CD4-positive, alpha-beta memory T cell (primary cell): ENCODE measurements at regions of chr20 and their contacts with region 1.

Region 1: DNA sequence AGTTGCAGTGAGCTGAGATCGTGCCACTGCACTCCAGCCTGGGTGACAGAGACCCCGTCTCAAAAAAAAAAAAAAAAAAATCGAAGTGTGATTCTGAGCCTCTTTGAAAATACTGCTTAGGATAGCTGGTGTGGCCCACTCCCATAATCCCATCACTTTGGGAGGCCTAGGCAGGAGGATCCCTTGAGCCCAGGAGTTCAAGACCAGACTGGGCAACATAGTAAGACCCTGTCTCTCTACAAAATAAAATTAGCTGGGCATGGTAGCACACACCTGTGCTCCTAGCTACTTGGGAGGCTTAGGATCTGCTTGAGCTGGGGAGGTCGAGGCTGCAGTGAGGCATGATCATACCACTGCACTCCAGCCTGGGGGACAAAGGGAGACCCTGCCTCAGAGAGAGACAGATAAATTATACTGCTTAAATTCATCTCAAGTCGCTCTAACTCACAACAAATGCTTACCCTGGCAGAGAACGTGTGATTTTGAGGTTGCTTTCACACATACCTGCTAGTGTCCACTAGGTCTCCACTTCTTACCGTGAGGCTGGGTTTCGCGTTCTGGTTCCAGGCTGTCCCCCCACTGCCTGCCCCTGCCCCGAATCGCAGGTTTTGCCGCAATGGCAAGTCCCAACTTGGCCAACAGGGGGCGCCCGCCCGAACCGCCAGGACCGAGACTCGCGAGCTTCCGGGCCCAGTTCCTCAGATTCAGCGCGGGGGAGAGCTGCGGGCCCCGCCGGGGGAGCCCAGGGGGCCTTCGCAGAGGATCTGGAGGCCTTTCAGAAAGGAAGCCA is 12.3 kb upstream of the TMC2 start:
- DNase-seq: peak; percentile 86 to 90 (median 87)
- H3K4me3 ChIP-seq: peak overlapping the region; percentile 59 to 83
- H3K4me3 Mint-ChIP-seq: peak overlapping the region; percentile 90 to 94 (median 92)
- H3K27ac ChIP-seq: peak overlapping the region; percentile 63
- H3K27ac Mint-ChIP-seq: peak overlapping the region; percentile 29 to 89 (median 77)
- H3K4me1 ChIP-seq: peaks cover 10% of the 10 kb centered on the region
- H3K4me1 Mint-ChIP-seq: peaks cover 10 to 23% (median 15%) of the 10 kb centered on the region in 4 donors
- H3K27me3 ChIP-seq: no peaks in the 10 kb centered on the region
- H3K27me3 Mint-ChIP-seq: peaks cover 0 to 2% of the 10 kb centered on the region in 2 donors

Region 2: DNA sequence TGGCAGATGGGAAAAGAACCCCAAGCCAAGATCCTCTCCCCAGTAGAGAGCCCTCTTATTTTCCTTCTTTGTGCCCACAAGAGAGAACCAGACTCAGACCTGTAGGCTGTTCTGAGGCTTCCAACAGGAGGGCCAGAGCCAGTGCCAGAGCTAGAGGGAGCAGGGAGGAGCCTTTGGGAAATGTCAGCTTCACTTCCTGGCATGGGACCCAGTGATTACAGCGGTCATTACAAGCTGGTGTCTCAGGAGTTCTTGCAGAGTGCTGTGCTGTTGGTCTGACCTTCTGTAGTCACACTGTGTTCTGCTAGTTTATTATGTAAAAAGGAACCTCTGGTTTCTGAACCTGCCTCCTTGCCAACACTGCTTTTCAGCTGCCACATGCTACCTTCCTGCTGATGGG is 383.6 kb before region 1 on chr20:
- CTCF ChIA-PET with region 1: no interaction called
- POLR2A ChIA-PET with region 1: no interaction called
- intact Hi-C with region 1: no loop called
- DNase-seq: no peak
- H3K4me3 ChIP-seq: no peak overlapping the region
- H3K4me3 Mint-ChIP-seq: no peak overlapping the region
- H3K27ac ChIP-seq: no peak overlapping the region
- H3K27ac Mint-ChIP-seq: peak overlapping the region in 2 of 7 donors; percentile 24 to 75
- H3K4me1 ChIP-seq: no peaks in the 10 kb centered on the region
- H3K4me1 Mint-ChIP-seq: peaks cover 7 to 18% (median 9%) of the 10 kb centered on the region in 4 donors
- H3K27me3 ChIP-seq: no peaks in the 10 kb centered on the region
- H3K27me3 Mint-ChIP-seq: no peaks in the 10 kb centered on the region

Region 3: GRCh38 chr20:2508631-2509467 is 15.3 kb before region 1 on chr20 and contains the start of gene ZNF343:
- CTCF ChIA-PET with region 1: interaction called, 117 read pairs
- POLR2A ChIA-PET with region 1: interaction called, 11 read pairs
- intact Hi-C with region 1: loop called (anchors 1 kb)
- DNase-seq: peak; percentile 81 to 84 (median 83)
- H3K4me3 ChIP-seq: peak within 1 kb of the TSS; percentile 89 to 96
- H3K4me3 Mint-ChIP-seq: peak within 1 kb of the TSS; percentile 98 to 100 (median 100)
- H3K27ac ChIP-seq: peak within 1 kb of the TSS; percentile 62
- H3K27ac Mint-ChIP-seq: peak within 1 kb of the TSS; percentile 92 to 99 (median 96)
- H3K4me1 ChIP-seq: peaks cover 15% of the 10 kb centered on the region
- H3K4me1 Mint-ChIP-seq: peaks cover 10 to 22% (median 16%) of the 10 kb centered on the region in 4 donors
- H3K27me3 ChIP-seq: peaks cover 6% of the 10 kb centered on the region
- H3K27me3 Mint-ChIP-seq: peaks cover 8 to 14% of the 10 kb centered on the region in 2 donors
- total RNA-seq, gene ZNF343: 11.8 to 12.0 TPM

Region 4: GRCh38 chr20:2610941-2611720 is 87.0 kb after region 1 on chr20:
- CTCF ChIA-PET with region 1: no interaction called
- POLR2A ChIA-PET with region 1: no interaction called
- intact Hi-C with region 1: no loop called
- DNase-seq: no peak
- H3K4me3 ChIP-seq: no peak overlapping the region
- H3K4me3 Mint-ChIP-seq: no peak overlapping the region
- H3K27ac ChIP-seq: no peak overlapping the region
- H3K27ac Mint-ChIP-seq: no peak overlapping the region
- H3K4me1 ChIP-seq: no peaks in the 10 kb centered on the region
- H3K4me1 Mint-ChIP-seq: no peaks in the 10 kb centered on the region
- H3K27me3 ChIP-seq: peaks cover 6% of the 10 kb centered on the region
- H3K27me3 Mint-ChIP-seq: peaks cover 27 to 30% of the 10 kb centered on the region in 2 donors

Region 5: GRCh38 chr20:2643708-2644107 is 119.6 kb after region 1 on chr20:
- CTCF ChIA-PET with region 1: interaction called, 12 read pairs
- POLR2A ChIA-PET with region 1: no interaction called
- intact Hi-C with region 1: loop called (anchors 1 kb)
- DNase-seq: no peak
- H3K4me3 ChIP-seq: no peak overlapping the region
- H3K4me3 Mint-ChIP-seq: no peak overlapping the region
- H3K27ac ChIP-seq: no peak overlapping the region
- H3K27ac Mint-ChIP-seq: peak overlapping the region in 1 of 7 donors; percentile 4
- H3K4me1 ChIP-seq: no peaks in the 10 kb centered on the region
- H3K4me1 Mint-ChIP-seq: peaks cover 0 to 10% (median 4%) of the 10 kb centered on the region in 4 donors
- H3K27me3 ChIP-seq: no peaks in the 10 kb centered on the region
- H3K27me3 Mint-ChIP-seq: no peaks in the 10 kb centered on the region

Region 6: DNA sequence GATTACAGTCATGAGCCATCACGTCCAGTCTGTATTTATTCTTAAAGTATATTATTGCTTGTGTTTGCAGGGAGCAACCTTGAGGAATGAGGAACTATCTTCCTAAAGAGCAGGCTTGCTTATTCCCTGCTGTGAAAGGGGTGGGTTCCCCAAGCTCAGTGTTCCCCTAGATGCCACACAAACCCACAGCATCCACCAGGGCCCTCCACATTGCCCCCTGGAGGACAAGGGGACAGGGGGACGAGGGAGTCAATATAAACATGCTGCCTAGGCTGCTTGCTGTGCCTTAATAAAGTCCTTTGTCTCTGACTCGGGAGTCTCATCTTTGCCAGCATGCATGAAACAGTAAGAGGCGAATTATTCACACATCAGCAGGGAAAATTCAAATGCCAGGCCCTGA is 147.9 kb after region 1 on chr20:
- CTCF ChIA-PET with region 1: interaction called, 9 read pairs
- POLR2A ChIA-PET with region 1: no interaction called
- intact Hi-C with region 1: loop called (anchors 1 kb)
- DNase-seq: no peak
- H3K4me3 ChIP-seq: no peak overlapping the region
- H3K4me3 Mint-ChIP-seq: no peak overlapping the region
- H3K27ac ChIP-seq: no peak overlapping the region
- H3K27ac Mint-ChIP-seq: no peak overlapping the region
- H3K4me1 ChIP-seq: no peaks in the 10 kb centered on the region
- H3K4me1 Mint-ChIP-seq: no peaks in the 10 kb centered on the region
- H3K27me3 ChIP-seq: no peaks in the 10 kb centered on the region
- H3K27me3 Mint-ChIP-seq: no peaks in the 10 kb centered on the region

Region 7: GRCh38 chr20:3000852-3001523 is 476.9 kb after region 1 on chr20:
- CTCF ChIA-PET with region 1: no interaction called
- POLR2A ChIA-PET with region 1: no interaction called
- intact Hi-C with region 1: loop called (anchors 5 kb)
- DNase-seq: peak; percentile 15 to 60 (median 45)
- H3K4me3 ChIP-seq: no peak overlapping the region
- H3K4me3 Mint-ChIP-seq: no peak overlapping the region
- H3K27ac ChIP-seq: no peak overlapping the region
- H3K27ac Mint-ChIP-seq: peak overlapping the region in 1 of 7 donors; percentile 53
- H3K4me1 ChIP-seq: no peaks in the 10 kb centered on the region
- H3K4me1 Mint-ChIP-seq: peaks cover 0 to 4% (median 2%) of the 10 kb centered on the region in 4 donors
- H3K27me3 ChIP-seq: no peaks in the 10 kb centered on the region
- H3K27me3 Mint-ChIP-seq: no peaks in the 10 kb centered on the region